ENCODE measurements at regions of chr1 and their contacts with region 1.

Region 1: GRCh38 chr1:47710329-47711071 is 272.7 kb downstream of the FOXD2 start:
- DNase-seq: peak; percentile 80 to 86
- ATAC-seq: peak; percentile 90 to 94 (median 91)
- H3K4me3 ChIP-seq: peak overlapping the region; percentile 66
- H3K27ac ChIP-seq: no peak overlapping the region
- H3K4me1 ChIP-seq: peaks cover 11% of the 10 kb centered on the region
- H3K27me3 ChIP-seq: peaks cover 0 to 92% (median 17%) of the 10 kb centered on the region in 3 donors
- CTCF ChIP-seq: peak; percentile 99

Region 2: DNA sequence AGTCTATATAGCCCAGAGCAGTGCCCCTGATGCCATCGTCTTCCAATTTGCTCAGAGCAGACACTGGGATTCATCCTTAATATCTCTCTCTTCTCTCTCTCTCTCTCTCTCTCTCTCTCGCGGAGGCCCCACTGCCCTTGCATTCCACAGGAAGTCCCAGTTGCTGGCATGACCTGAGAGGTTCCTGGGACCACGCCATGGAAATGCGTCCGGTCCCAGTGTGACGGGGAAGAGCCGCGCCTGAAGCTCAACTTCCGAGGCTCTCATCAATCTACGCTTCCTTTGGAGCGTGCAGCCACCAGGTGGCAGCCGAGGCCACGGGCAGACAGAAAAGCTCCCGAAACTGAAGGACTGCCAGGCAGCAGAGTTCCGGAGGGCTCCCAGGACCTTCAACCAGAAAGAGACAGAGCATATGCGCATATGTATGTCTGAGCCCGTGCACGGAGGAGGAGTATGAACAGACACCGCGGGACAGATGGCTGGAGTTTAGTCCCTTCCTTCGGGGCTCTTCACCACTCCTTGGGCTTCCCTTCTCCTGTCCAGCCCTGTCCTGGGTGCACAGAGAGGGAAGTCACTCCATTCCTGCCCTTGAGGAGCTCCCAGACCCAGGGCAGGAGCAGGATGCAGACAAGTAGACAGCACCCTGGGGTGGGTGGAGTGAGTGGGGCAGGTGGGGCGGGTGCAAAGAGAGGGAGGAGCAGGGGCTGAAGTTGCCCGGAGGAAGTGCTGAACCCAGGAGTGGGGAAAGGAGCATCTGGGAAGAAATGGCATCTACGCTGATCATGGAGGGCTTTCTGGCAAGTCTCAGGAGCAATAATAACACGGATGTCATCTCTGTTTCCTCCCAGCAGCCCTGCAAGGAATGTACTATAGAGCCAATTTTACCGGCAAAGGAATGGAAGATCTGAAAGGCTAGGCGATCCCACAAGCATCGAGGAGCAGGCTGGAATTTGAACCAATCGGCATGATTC is 531.2 kb before region 1 on chr1:
- intact Hi-C with region 1: loop called (anchors 2 to 5 kb)
- DNase-seq: peak; percentile 93 to 94
- ATAC-seq: peak; percentile 89 to 95 (median 90)
- H3K4me3 ChIP-seq: peak overlapping the region; percentile 52
- H3K27ac ChIP-seq: no peak overlapping the region
- H3K4me1 ChIP-seq: peaks cover 6% of the 10 kb centered on the region
- H3K27me3 ChIP-seq: peaks cover 0 to 17% (median 0%) of the 10 kb centered on the region in 3 donors
- CTCF ChIP-seq: peak; percentile 89

Region 3: GRCh38 chr1:47388891-47389238 is 321.6 kb before region 1 on chr1:
- intact Hi-C with region 1: loop called in 1 of 2 experiments (anchors 5 kb)
- DNase-seq: peak; percentile 37 to 62
- ATAC-seq: peak; percentile 66 to 77 (median 72)
- H3K4me3 ChIP-seq: no peak overlapping the region
- H3K27ac ChIP-seq: no peak overlapping the region
- H3K4me1 ChIP-seq: no peaks in the 10 kb centered on the region
- H3K27me3 ChIP-seq: peaks cover 0 to 2% (median 0%) of the 10 kb centered on the region in 3 donors
- CTCF ChIP-seq: peak; percentile 62

Region 4: GRCh38 chr1:47437447-47438164 is 272.9 kb before region 1 on chr1 and contains the start of gene FOXD2:
- intact Hi-C with region 1: loop called (anchors 5 kb)
- DNase-seq: peak; percentile 88 to 92
- ATAC-seq: peak; percentile 93 to 96 (median 95)
- H3K4me3 ChIP-seq: peak within 1 kb of the TSS; percentile 69
- H3K27ac ChIP-seq: peak within 1 kb of the TSS; percentile 34
- H3K4me1 ChIP-seq: no peaks in the 10 kb centered on the region
- H3K27me3 ChIP-seq: peaks cover 0 to 90% (median 54%) of the 10 kb centered on the region in 3 donors
- CTCF ChIP-seq: peak; percentile 96
- total RNA-seq, gene FOXD2: 0.04 to 0.13 (median 0.09) TPM

Region 5: DNA sequence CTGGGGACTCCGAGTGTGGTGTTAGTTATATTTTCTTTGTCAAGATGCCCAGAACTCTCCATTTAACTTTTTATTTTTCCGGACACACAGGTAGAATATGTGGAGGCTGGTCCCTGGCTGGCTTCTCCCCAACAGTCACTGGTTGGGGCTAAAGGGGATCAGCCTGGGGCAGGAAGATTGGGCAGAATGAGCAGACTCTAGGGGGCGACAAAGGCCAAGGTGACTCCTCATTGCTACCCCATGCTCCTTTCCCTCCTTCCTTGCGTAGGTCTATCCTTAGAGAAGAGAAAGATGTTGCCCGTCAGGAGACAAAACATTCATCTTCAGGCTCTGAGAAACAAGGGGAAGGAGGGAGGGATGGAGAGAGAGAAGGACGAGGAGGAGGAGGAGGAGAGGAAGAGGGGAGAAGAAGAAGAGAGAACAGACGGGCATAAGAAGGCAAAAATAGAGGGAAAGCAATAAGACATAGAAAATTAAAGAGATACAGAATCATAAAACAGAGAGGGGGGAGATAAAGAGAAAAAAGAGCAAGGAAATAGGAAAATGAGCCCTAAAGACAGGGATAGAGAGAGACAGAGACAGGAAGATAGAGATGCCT is 182.7 kb before region 1 on chr1:
- intact Hi-C with region 1: loop called (anchors 5 kb)
- DNase-seq: no peak
- ATAC-seq: peak in 2 of 4 donors; percentile 57 to 58
- H3K4me3 ChIP-seq: no peak overlapping the region
- H3K27ac ChIP-seq: no peak overlapping the region
- H3K4me1 ChIP-seq: no peaks in the 10 kb centered on the region
- H3K27me3 ChIP-seq: peaks cover 0 to 38% (median 0%) of the 10 kb centered on the region in 3 donors
- CTCF ChIP-seq: peak; percentile 32

Region 6: DNA sequence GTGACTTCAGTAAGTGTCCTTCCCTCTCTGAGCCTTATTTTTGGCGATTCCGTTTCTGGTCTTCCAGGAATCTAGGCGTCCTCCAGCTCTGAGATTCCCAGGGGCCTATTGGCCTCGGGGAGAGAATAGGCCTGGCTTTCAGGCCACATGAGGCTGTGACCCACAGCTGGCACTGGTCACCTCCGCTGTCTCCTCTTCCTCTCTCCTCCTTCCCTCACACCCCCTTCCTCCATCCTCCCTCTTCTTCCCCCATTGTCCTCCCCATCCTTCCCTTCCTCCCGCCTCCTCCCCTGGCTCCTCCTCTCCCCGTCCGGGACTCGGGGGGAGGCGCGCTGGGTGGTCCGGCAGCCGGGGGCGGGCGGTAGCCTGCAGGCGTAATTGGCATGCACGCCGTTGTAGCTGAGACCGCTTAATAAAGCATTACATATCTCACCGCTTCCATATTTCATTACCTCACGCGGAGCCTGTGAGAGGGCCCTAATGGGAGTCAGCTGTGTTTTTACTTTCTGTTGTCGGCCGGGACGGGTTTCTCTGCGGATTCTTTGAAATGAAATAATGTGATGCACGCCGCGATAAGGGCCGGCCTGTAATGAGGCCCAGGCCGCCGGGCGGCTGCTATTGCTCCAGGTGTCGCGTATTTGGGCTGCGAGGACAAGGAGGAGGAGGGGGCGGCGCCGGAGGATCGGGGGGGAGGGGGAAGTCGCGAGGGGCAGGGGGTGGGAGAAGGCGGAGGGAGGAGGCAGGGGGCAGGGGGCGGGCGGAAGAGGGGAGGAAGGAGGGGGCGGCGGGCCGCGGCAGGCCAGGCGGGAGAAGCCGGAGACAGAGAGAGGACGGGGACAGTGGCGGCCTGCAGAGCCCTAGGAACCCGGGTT is 177.3 kb before region 1 on chr1:
- intact Hi-C with region 1: loop called (anchors 5 kb)
- DNase-seq: peak; percentile 40 to 64
- ATAC-seq: peak in 3 of 4 donors; percentile 34 to 63 (median 46)
- H3K4me3 ChIP-seq: peak overlapping the region; percentile 57
- H3K27ac ChIP-seq: no peak overlapping the region
- H3K4me1 ChIP-seq: peaks cover 6% of the 10 kb centered on the region
- H3K27me3 ChIP-seq: peaks cover 0 to 53% (median 1%) of the 10 kb centered on the region in 3 donors
- CTCF ChIP-seq: no peak

Region 7: GRCh38 chr1:47684964-47685762 is 25.3 kb before region 1 on chr1:
- intact Hi-C with region 1: no loop called
- DNase-seq: no peak
- ATAC-seq: no peak
- H3K4me3 ChIP-seq: no peak overlapping the region
- H3K27ac ChIP-seq: no peak overlapping the region
- H3K4me1 ChIP-seq: no peaks in the 10 kb centered on the region
- H3K27me3 ChIP-seq: peaks cover 0 to 18% (median 2%) of the 10 kb centered on the region in 3 donors
- CTCF ChIP-seq: no peak

Region 8: DNA sequence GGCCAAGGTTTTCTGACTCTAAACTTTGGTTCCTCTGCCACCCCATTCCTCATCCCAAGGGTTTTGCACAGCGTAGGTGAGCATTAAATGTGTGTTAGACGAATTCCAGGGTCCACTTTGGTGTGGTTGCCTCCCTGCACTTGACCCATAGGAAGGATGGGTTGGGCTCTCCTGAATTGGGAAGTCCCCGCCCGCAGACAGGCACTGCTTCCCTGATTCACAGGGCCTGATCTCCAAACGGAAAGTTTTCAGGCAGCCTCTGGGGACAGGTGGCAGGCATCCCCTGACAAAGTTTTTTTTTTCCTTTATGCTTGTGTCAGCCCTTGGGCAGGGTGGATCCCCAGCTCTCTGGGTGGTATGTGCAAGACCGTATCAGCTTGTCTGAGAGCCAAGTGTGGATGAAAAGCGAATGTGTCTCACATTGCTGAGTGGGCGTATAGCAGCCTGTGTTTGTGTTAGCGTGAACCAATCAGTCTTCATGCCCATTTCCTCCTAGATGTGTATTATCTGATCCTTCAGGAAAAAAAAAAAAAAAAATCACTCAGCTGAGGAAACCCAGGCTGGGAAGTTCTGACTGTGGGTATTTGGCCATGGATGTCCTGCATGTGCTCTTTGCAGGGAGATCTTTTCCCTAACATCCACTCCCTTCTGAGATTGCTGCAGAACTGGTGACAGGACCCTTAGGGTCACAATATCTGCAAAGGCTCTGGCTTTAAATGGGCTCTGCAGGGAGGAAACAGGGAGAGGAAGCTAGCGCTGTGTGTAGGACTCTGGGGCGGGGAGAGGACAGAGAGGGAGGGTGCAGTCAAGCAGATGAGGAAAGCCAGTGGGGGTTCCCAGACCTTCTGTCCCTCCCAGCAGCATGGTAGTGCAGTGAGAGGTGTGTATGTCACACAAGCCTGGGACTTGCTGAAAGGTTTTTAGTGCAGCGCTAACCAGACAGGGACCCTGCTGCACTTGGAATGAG is 328.9 kb after region 1 on chr1:
- intact Hi-C with region 1: no loop called
- DNase-seq: no peak
- ATAC-seq: no peak
- H3K4me3 ChIP-seq: no peak overlapping the region
- H3K27ac ChIP-seq: no peak overlapping the region
- H3K4me1 ChIP-seq: no peaks in the 10 kb centered on the region
- H3K27me3 ChIP-seq: peaks cover 0 to 4% (median 0%) of the 10 kb centered on the region in 3 donors
- CTCF ChIP-seq: no peak

Measured in psoas muscle (tissue), 8 donors.